Activated T-helper 1 cell treated with anti-CD3 and anti-CD28 coated beads, Interleukin-12 subunit alpha, Interleukin-12 subunit beta, Interleukin-2, Interleukin-4 antibody, amounts not matched to agents 30 ng/mL and 10 ng/mL and 1 ng/mL, durations not matched to agents 14 hours and 24 hours and 36 hours (primary cell): ENCODE measurements at regions of chr12 and their contacts with region 1.

Region 1: DNA sequence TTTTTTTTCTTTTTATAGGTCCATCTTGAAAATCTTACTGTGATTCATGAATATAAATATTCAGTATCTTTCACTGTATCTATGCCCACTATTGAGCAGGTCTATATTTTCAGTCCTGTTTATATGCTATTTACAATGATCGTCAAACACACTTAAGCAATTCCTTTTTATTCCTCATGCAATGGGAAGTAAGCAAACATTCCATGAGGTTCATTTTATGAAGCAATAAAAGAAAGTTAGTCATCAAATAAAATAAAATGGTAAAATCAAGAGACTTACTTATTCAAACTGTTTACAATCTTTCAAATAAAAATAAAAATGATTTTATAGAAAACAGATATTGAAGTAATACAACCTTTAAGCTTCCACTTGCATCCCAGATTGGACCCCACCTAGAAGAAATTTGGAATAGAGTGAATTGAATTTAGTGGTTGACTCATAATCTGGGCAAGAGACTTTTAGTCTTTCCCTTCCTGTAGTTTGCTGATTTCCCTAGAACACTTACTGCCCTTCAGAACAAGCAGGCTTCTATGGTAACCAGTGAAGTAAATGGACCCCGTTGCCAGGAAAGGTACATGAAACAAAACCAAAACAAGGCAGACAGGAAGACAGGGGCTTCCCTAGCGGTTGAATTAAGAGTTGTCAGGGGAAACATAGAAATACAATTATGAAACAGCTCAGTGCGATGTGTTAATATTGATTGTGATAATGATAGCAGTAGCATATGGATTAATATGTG is 241.0 kb upstream of the ATP2B1 start:
- DNase-seq: peak; percentile 51
- H3K4me3 Mint-ChIP-seq: no peak overlapping the region
- H3K27ac Mint-ChIP-seq: no peak overlapping the region
- H3K4me1 Mint-ChIP-seq: peaks cover 33% of the 10 kb centered on the region
- H3K27me3 Mint-ChIP-seq: no peaks in the 10 kb centered on the region

Region 2: GRCh38 chr12:88453323-88453722 is 1496.3 kb before region 1 on chr12:
- intact Hi-C with region 1: no loop called
- DNase-seq: no peak
- H3K4me3 Mint-ChIP-seq: no peak overlapping the region
- H3K27ac Mint-ChIP-seq: no peak overlapping the region
- H3K4me1 Mint-ChIP-seq: no peaks in the 10 kb centered on the region
- H3K27me3 Mint-ChIP-seq: no peaks in the 10 kb centered on the region

Region 3: GRCh38 chr12:89593873-89594272 is 355.8 kb before region 1 on chr12:
- intact Hi-C with region 1: no loop called
- DNase-seq: no peak
- H3K4me3 Mint-ChIP-seq: no peak overlapping the region
- H3K27ac Mint-ChIP-seq: no peak overlapping the region
- H3K4me1 Mint-ChIP-seq: peaks cover 19% of the 10 kb centered on the region
- H3K27me3 Mint-ChIP-seq: peaks cover 2% of the 10 kb centered on the region

Region 4: DNA sequence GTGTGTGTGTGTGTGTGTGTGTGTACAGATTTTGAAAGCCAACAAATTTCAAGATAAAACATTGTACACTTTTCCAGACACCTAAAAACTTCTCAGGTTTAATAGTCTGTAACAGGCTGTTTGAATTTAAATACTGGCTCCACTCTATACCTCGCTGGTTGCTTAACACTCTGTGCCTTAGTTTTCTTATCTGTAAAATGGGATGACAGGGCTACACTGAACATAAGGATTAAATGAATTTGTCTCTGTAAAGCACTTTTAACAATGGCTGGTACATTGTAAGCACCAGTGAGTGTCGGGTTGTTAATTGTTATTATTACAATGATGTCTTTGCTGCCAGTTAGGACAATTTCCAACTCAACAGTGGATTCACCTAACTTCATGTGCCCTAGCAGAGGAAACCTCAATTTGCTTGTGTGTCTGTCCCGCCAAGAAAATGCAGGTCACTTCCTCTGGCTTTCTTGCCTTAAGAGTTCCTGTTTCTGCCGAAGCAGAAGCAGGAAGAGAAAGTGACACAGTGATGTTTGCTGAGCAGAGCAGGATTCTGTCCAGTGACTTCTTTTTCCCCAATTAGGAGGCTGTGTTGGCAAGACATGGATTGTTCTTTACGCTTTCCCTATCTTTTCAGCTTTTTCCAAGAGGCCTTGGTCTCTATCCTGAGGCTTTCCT is 87.0 kb before region 1 on chr12:
- intact Hi-C with region 1: loop called (anchors 1 kb)
- DNase-seq: peak; percentile 44
- H3K4me3 Mint-ChIP-seq: peak overlapping the region; percentile 76
- H3K27ac Mint-ChIP-seq: peak overlapping the region; percentile 95
- H3K4me1 Mint-ChIP-seq: peaks cover 60% of the 10 kb centered on the region
- H3K27me3 Mint-ChIP-seq: no peaks in the 10 kb centered on the region

Region 5: GRCh38 chr12:89882050-89882449 is 67.6 kb before region 1 on chr12:
- intact Hi-C with region 1: loop called (anchors 1 kb)
- DNase-seq: no peak
- H3K4me3 Mint-ChIP-seq: no peak overlapping the region
- H3K27ac Mint-ChIP-seq: no peak overlapping the region
- H3K4me1 Mint-ChIP-seq: peaks cover 23% of the 10 kb centered on the region
- H3K27me3 Mint-ChIP-seq: peaks cover 2% of the 10 kb centered on the region

Region 6: DNA sequence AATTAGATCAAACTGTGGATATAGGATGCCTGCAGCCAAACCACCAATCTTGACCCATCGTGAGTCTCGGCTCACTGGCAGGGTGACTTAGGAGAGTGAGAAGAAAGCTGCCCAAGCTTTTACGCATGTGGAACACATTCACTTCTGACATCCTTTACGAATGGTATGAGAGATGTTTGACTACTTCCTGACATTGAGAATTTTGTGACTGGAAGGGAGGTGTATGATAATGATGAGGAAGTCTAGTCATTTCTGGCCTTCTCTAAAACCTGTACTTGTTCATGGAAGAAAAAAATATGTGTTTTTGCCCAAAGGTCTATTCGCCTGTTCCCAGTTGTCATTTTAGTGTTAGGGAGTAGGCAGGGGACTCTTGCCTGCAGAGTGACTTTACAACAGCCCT is 13.8 kb before region 1 on chr12:
- intact Hi-C with region 1: loop called (anchors 1 kb)
- DNase-seq: no peak
- H3K4me3 Mint-ChIP-seq: no peak overlapping the region
- H3K27ac Mint-ChIP-seq: no peak overlapping the region
- H3K4me1 Mint-ChIP-seq: peaks cover 17% of the 10 kb centered on the region
- H3K27me3 Mint-ChIP-seq: no peaks in the 10 kb centered on the region

Region 7: GRCh38 chr12:89960011-89960507 is 10.4 kb after region 1 on chr12:
- intact Hi-C with region 1: loop called (anchors 1 kb)
- DNase-seq: peak; percentile 18
- H3K4me3 Mint-ChIP-seq: no peak overlapping the region
- H3K27ac Mint-ChIP-seq: no peak overlapping the region
- H3K4me1 Mint-ChIP-seq: peaks cover 20% of the 10 kb centered on the region
- H3K27me3 Mint-ChIP-seq: peaks cover 17% of the 10 kb centered on the region

Region 8: DNA sequence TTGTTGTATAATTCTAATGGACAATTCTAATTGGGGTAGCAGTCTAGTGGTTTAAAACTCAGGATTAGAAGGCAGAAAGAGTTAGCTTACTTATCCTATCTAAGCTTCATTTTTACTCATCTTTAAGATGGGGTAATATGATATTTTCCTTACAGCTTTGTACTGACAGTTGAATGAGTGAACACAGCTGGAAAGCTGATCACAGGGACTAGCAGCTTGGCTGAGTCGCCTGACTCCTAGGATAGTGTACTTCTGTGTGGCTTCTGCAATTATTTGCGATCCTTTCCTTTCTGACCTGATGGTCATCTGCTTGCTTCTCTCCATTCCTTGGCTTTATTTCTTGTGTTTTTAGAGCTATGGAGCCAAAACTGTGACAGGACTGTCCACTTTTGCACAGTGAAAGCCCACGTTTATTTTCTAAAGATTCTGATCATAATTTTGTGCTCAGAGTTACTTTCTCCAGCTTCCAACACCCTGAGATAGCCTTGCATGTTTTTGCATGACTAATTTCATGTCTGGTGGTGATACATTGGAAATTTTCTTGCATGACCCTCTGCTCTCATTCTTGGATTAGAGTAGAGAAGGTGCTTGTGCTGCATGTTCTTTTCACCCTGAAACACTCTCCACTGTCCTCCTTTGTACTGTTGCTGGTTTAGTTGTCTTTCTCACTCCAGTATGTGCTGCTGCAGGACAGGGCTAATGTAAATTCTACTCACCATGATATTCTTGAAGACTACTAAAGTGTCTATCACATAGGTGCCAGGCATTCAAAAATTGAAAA is 136.1 kb after region 1 on chr12:
- intact Hi-C with region 1: loop called (anchors 5 kb)
- DNase-seq: no peak
- H3K4me3 Mint-ChIP-seq: no peak overlapping the region
- H3K27ac Mint-ChIP-seq: no peak overlapping the region
- H3K4me1 Mint-ChIP-seq: peaks cover 5% of the 10 kb centered on the region
- H3K27me3 Mint-ChIP-seq: peaks cover 2% of the 10 kb centered on the region

Region 9: DNA sequence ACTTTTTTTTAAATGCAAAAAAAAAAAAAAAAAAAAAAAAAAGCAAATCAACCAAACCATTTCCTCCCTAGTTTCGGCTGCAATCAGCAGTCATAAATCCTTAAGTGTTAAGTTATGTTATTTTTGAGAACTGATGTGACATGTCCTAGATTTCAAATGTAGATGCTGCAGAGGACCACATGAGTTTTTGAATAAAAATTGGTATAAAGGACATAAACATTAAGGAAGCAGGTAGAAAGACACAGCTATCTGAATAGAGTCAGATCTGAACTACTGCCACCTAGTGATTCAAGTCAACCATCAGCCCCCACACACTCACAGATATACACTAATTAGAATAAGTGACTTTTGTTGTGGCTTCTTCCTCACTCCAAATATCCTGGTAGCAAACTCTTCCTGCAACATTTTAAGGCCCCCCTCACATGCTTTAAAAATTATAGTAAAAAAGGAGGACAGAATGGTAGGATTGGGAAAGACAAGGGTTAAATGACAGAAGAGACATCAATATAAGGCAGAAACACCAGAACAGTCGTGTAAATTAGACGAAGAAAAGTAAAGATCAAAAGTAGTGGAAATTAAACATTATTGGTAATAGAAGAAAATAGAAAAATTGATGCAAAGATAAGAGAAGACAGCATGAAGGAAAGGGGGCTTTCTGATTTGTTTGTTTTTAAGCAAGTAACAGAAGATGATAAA is 153.5 kb after region 1 on chr12:
- intact Hi-C with region 1: loop called (anchors 5 kb)
- DNase-seq: no peak
- H3K4me3 Mint-ChIP-seq: no peak overlapping the region
- H3K27ac Mint-ChIP-seq: no peak overlapping the region
- H3K4me1 Mint-ChIP-seq: peaks cover 6% of the 10 kb centered on the region
- H3K27me3 Mint-ChIP-seq: peaks cover 2% of the 10 kb centered on the region